Calu3 (cell line): ENCODE measurements at regions of chr3 and their contacts with region 1.

Region 1: DNA sequence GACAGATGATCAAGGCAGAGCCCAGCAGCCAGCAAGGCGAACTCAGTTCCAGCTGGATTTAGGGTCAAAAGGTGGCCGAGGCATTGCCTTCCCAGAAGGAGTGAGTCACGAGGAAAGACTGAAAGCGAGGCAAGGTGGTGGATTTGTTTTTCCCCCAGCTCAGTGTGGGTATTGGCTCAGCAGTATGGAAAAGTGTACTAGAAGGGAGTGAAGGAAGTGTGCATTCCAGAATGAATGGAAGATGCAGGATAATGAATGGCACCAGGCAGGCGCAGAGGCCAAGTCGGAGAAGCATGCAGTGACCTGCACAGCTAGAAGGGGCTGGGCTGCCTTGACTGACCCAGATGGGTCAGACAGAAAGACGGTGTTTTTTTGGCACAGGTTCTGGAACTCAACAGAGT is 46.3 kb downstream of the FOXP1 start:
- DNase-seq: peak; percentile 38
- H3K4me3 Mint-ChIP-seq: peak overlapping the region; percentile 15
- H3K27ac Mint-ChIP-seq: peak overlapping the region; percentile 12
- H3K4me1 Mint-ChIP-seq: peaks cover 60% of the 10 kb centered on the region
- H3K27me3 Mint-ChIP-seq: no peaks in the 10 kb centered on the region
- CTCF ChIP-seq: no peak

Region 2: DNA sequence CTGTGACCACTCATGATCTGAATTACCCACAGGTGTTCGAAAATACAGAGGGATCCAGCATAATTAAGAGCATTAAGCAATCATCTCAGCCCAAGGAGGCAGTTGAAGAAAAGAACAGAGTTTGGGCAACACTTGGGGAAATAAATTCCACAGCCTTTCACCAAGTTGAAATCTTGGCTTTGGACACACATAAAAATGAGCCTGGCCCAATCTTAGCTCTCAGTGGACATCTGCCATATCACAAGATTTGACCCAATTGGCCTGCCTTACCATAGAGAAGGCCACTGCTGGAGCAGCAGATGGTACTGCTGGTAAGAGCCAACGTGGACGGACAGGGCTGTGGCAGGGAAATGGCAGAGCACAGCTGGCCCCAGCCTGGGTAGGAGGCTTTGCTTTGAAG is 33.3 kb after region 1 on chr3:
- CTCF ChIA-PET with region 1: no interaction called
- intact Hi-C with region 1: loop called (anchors 5 kb)
- DNase-seq: no peak
- H3K4me3 Mint-ChIP-seq: no peak overlapping the region
- H3K27ac Mint-ChIP-seq: no peak overlapping the region
- H3K4me1 Mint-ChIP-seq: no peaks in the 10 kb centered on the region
- H3K27me3 Mint-ChIP-seq: no peaks in the 10 kb centered on the region
- CTCF ChIP-seq: no peak